Naive thymus-derived CD4-positive, alpha-beta T cell (primary cell): ENCODE measurements at regions of chr2 and their contacts with region 1.

Region 1: GRCh38 chr2:86195055-86195807 is at the start of gene IMMT:
- DNase-seq: peak; percentile 86 to 96 (median 94)
- ATAC-seq: peak; percentile 94
- H3K4me3 ChIP-seq: peak within 1 kb of the TSS; percentile 74
- H3K4me3 Mint-ChIP-seq: peak within 1 kb of the TSS; percentile 86 to 99 (median 95)
- H3K27ac ChIP-seq: peak within 1 kb of the TSS; percentile 97
- H3K27ac Mint-ChIP-seq: peak within 1 kb of the TSS; percentile 82 to 97 (median 90)
- H3K4me1 ChIP-seq: peaks cover 15 to 23% of the 10 kb centered on the region in 2 donors
- H3K4me1 Mint-ChIP-seq: peaks cover 35 to 74% (median 60%) of the 10 kb centered on the region in 7 donors
- H3K27me3 ChIP-seq: no peaks in the 10 kb centered on the region
- H3K27me3 Mint-ChIP-seq: no peaks in the 10 kb centered on the region
- total RNA-seq, gene IMMT: 59.2 to 164 (median 77.0) TPM

Region 2: GRCh38 chr2:88016086-88016959 is 1821.1 kb after region 1 on chr2 and contains the start of gene RNU2-63P:
- CTCF ChIA-PET with region 1: no interaction called
- POLR2A ChIA-PET with region 1: no interaction called
- intact Hi-C with region 1: loop called in 1 of 2 experiments (anchors 10 kb)
- DNase-seq: peak; percentile 70 to 87 (median 84)
- ATAC-seq: peak; percentile 87
- H3K4me3 ChIP-seq: peak within 1 kb of the TSS; percentile 93
- H3K4me3 Mint-ChIP-seq: peak within 1 kb of the TSS; percentile 95 to 99 (median 97)
- H3K27ac ChIP-seq: peak within 1 kb of the TSS; percentile 90
- H3K27ac Mint-ChIP-seq: peak within 1 kb of the TSS; percentile 97 to 100 (median 99)
- H3K4me1 ChIP-seq: peaks cover 0 to 4% of the 10 kb centered on the region in 2 donors
- H3K4me1 Mint-ChIP-seq: peaks cover 5 to 29% (median 21%) of the 10 kb centered on the region in 7 donors
- H3K27me3 ChIP-seq: no peaks in the 10 kb centered on the region
- H3K27me3 Mint-ChIP-seq: no peaks in the 10 kb centered on the region
- total RNA-seq, gene RNU2-63P: 14.5 to 28.7 (median 16.6) TPM in 3 of 5 experiments, not detected in the others